Endothelial cell of umbilical vein (primary cell): ENCODE measurements at regions of chr2 and their contacts with region 1.

Region 1: DNA sequence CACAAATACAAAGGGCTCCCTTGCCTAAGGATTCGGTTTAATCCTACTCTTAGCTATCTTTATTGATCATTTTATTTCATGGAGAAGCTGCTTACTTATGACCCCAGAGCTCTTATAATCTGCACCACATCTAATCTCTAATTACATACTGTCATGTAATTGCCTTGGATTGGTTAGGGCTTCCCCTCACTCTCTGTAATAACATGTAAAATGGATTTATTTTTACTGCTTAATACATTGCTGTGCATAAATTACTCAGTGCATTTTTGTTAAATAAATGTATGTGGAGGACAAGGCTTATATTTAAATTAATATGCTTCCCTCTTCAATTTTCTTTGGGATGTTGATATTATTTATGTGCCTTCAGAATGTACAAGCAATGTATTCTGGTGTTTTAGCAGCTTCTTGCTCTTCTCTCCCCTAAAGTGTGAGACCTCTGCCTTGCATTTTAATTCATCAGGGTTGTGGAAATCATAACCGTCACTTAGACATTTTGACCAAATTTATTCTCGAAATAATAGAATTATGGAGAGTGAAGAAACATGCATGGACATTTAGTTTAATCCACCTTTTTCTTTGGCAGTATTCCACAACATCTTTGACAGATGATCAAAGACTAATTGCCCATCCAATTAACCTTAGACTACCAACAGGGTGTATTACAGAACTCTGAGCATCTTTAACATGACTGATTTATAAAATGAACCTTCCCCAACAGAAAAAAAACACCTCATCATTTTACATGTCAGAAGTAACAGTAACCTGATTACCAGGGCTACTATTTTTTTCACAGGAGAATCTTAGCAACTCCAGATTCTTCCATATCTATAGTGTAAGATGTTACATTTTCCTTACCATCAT is 692.6 kb downstream of the LRRTM4 start:
- DNase-seq: no peak
- H3K4me3 ChIP-seq: no peak overlapping the region
- H3K27ac ChIP-seq: no peak overlapping the region
- H3K4me1 ChIP-seq: no peaks in the 10 kb centered on the region
- H3K27me3 ChIP-seq: no peaks in the 10 kb centered on the region
- CTCF ChIP-seq: no peak
- POLR2A ChIP-seq: no peak

Region 2: GRCh38 chr2:76808551-76809131 is 21.0 kb before region 1 on chr2:
- CTCF ChIA-PET with region 1: no interaction called
- POLR2A ChIA-PET with region 1: no interaction called
- dilution Hi-C with region 1: no loop called
- intact Hi-C with region 1: loop called (anchors 2 kb)
- DNase-seq: peak; percentile 30
- H3K4me3 ChIP-seq: no peak overlapping the region
- H3K27ac ChIP-seq: no peak overlapping the region
- H3K4me1 ChIP-seq: no peaks in the 10 kb centered on the region
- H3K27me3 ChIP-seq: no peaks in the 10 kb centered on the region
- CTCF ChIP-seq: no peak
- POLR2A ChIP-seq: no peak

Region 3: GRCh38 chr2:77397763-77398162 is 568.2 kb after region 1 on chr2:
- CTCF ChIA-PET with region 1: no interaction called
- POLR2A ChIA-PET with region 1: no interaction called
- dilution Hi-C with region 1: no loop called
- intact Hi-C with region 1: no loop called
- DNase-seq: no peak
- H3K4me3 ChIP-seq: no peak overlapping the region
- H3K27ac ChIP-seq: no peak overlapping the region
- H3K4me1 ChIP-seq: no peaks in the 10 kb centered on the region
- H3K27me3 ChIP-seq: no peaks in the 10 kb centered on the region
- CTCF ChIP-seq: no peak
- POLR2A ChIP-seq: no peak